PC-3 (cell line): ENCODE measurements at regions of chr22 and their contacts with region 1.

Region 1: GRCh38 chr22:28594797-28595462 is 84.7 kb downstream of the TTC28 start:
- DNase-seq: peak; percentile 61
- ATAC-seq: peak; percentile 75
- H3K4me3 ChIP-seq: no peak overlapping the region
- H3K27ac ChIP-seq: 0 out of 2 replicates have a peak overlapping the region, but pooled peaks have one; percentile 10
- H3K4me1 ChIP-seq: peaks cover 15% of the 10 kb centered on the region
- H3K27me3 ChIP-seq: no peaks in the 10 kb centered on the region
- CTCF ChIP-seq: peak; percentile 76

Region 2: DNA sequence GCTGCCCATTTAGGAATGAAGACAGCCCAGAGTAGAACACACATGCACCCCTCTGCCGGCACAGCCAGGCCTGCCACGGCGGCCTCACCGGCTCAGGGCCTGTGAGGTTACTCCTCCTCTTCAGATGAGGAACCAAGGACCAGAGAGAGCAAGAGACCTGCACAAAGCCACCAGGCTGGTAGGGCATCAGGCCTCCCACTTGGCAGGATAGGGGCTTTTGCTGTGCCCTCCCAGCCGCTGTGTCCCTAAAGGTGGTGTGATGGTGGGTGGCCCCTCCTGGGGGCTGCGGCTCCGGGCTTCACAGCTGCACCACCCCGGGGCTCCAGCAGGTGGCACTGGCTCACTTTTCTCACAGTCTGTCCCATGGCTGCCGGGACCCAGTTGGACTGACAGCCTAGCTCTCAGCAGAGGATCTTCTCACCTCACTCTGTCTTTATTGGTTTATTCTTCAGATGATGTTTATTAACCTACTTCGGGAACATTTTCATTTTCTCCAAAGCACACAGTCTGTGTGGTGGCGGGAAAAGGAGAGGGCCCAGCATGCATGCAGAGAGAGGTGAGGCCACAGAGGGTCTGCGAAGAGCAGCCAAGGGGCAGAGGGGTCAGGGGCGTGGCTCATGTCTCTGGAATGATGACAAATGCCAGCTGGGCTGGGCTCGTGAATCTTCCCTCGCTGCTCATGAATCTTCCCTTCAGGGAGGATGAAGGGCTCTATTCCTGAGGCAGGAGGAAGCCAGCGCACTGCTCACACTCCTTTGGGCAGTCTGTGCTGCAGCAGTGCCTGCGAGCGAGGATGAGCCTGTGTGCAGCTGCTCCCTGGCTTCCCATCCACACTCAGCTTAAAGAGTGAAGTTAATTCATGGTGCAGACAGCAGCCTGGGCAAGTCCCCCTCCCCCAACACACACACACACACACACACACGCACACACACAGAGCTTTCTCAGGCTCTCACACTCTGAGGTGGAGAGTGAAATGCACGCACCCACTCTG is 574.8 kb before region 1 on chr22:
- CTCF ChIA-PET with region 1: no interaction called
- POLR2A ChIA-PET with region 1: no interaction called
- intact Hi-C with region 1: loop called (anchors 1 kb)
- DNase-seq: peak; percentile 52
- ATAC-seq: peak; percentile 87
- H3K4me3 ChIP-seq: no peak overlapping the region
- H3K27ac ChIP-seq: no peak overlapping the region; the same call in 1 of the 2 replicates
- H3K4me1 ChIP-seq: peaks cover 13% of the 10 kb centered on the region
- H3K27me3 ChIP-seq: no peaks in the 10 kb centered on the region
- CTCF ChIP-seq: peak; percentile 87

Region 3: DNA sequence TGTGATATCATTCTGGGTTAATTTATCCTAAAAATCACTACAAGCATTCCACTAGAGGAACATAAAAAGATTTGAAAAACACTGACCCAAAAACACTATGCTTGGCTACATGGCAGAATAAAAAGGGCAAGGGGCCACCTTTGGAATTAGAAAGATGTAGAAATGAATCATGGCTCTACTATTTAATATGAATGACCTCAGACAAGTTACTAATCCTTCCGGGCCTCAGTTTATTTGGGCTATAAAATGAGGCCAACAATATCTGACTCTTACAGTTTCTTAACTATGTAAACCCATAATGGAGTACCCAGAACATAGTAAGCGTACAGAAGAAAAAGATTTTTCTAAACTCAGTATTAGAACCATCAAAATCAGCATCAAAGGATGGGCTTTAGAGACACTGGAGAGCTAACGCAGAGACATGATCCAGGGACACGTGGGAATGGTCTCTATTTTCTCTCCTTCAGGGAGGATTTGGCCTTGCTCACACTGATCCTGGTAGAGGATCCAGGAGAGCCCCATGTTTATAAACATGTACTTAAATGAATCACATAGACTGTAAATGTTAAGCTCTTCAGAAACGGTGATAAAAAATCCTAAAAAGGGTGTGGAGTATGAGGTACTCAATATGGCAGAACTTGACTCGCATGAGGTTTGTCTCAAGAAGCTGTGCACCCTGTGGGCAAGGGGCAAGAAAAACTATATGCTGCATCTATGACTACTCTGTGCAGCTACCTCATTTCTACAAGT is 387.5 kb before region 1 on chr22:
- CTCF ChIA-PET with region 1: no interaction called
- POLR2A ChIA-PET with region 1: no interaction called
- intact Hi-C with region 1: loop called (anchors 10 kb)
- DNase-seq: peak; percentile 30
- ATAC-seq: peak; percentile 83
- H3K4me3 ChIP-seq: no peak overlapping the region
- H3K27ac ChIP-seq: peak overlapping the region; percentile 29; the same call in 1 of the 2 replicates
- H3K4me1 ChIP-seq: peaks cover 9% of the 10 kb centered on the region
- H3K27me3 ChIP-seq: no peaks in the 10 kb centered on the region
- CTCF ChIP-seq: no peak

Region 4: DNA sequence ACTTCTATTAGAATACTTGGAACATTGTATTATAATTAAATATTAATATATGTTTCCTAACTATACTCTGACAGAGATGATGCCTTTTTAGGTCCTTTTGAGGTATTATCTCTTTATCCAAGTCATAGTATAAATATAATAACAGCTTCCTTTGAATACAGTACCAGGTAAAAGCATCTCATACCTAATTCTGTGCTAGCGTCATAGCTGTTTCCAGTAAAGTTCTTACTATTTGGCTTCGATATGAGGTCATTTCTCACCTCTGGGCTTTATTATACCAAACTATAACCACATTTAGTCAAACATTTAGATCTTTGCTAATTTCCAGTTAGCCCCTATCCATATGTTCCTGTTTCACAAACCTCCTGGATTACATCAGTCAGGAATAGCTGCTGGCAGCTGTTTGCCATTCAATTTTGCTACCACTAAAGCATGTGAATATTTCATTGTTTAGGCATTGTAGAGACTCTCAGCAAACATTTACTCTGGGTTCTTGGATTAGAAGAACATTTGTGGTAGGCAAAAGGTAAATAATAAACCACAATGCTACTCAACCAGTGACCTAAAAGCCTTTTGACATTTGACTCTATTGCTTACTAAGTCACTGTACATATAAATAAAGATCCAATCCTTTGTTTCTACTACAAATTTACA is 170.4 kb before region 1 on chr22:
- CTCF ChIA-PET with region 1: no interaction called
- POLR2A ChIA-PET with region 1: no interaction called
- intact Hi-C with region 1: loop called (anchors 5 kb)
- DNase-seq: peak; percentile 68
- ATAC-seq: peak; percentile 94
- H3K4me3 ChIP-seq: no peak overlapping the region
- H3K27ac ChIP-seq: no peak overlapping the region
- H3K4me1 ChIP-seq: peaks cover 18% of the 10 kb centered on the region
- H3K27me3 ChIP-seq: no peaks in the 10 kb centered on the region
- CTCF ChIP-seq: no peak

Region 5: DNA sequence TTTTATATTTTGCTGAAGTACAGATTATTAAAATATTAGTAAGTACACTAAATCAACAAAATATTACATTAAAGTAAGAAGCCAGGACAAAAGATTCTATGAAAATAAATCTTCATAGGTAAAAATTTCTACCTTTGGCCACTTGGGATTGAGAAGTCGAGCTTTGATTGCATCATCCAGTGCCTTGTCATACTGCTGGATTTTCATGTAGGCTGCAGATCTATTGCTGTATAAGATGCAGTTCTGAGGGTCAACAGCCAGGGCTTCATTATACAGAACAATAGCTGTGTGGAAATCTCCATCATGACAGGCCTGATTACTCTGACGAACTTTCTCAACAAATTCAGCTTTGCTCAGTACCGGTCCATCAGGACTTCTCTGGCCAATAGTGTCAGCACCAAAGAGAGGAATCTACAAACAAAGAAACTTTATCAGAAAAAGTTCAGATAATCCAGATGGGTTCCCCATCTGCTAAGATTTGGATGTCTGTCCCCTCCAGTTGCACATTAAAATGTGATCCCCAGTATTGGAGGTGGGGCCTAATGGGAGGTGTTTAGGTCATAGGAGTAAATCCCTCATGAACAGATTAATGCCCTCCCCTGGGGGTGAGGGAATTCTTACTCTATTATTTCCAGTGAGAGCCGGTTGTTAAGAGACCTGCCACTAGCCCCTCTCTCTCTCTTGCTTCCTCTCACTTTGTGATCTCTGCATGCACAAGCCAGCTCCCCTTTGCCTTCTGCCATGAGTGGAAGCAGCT is 34.7 kb after region 1 on chr22:
- CTCF ChIA-PET with region 1: no interaction called
- POLR2A ChIA-PET with region 1: no interaction called
- intact Hi-C with region 1: no loop called
- DNase-seq: no peak
- ATAC-seq: no peak
- H3K4me3 ChIP-seq: no peak overlapping the region
- H3K27ac ChIP-seq: no peak overlapping the region
- H3K4me1 ChIP-seq: no peaks in the 10 kb centered on the region
- H3K27me3 ChIP-seq: no peaks in the 10 kb centered on the region
- CTCF ChIP-seq: no peak

Region 6: GRCh38 chr22:29040385-29041275 is 445.7 kb after region 1 on chr22:
- CTCF ChIA-PET with region 1: no interaction called
- POLR2A ChIA-PET with region 1: no interaction called
- intact Hi-C with region 1: loop called (anchors 5 kb)
- DNase-seq: peak; percentile 64
- ATAC-seq: peak; percentile 60
- H3K4me3 ChIP-seq: no peak overlapping the region
- H3K27ac ChIP-seq: no peak overlapping the region
- H3K4me1 ChIP-seq: peaks cover 16% of the 10 kb centered on the region
- H3K27me3 ChIP-seq: no peaks in the 10 kb centered on the region
- CTCF ChIP-seq: peak; percentile 88